Brain microvascular endothelial cell (primary cell): ENCODE measurements at regions of chr7 and their contacts with region 1.

Region 1: DNA sequence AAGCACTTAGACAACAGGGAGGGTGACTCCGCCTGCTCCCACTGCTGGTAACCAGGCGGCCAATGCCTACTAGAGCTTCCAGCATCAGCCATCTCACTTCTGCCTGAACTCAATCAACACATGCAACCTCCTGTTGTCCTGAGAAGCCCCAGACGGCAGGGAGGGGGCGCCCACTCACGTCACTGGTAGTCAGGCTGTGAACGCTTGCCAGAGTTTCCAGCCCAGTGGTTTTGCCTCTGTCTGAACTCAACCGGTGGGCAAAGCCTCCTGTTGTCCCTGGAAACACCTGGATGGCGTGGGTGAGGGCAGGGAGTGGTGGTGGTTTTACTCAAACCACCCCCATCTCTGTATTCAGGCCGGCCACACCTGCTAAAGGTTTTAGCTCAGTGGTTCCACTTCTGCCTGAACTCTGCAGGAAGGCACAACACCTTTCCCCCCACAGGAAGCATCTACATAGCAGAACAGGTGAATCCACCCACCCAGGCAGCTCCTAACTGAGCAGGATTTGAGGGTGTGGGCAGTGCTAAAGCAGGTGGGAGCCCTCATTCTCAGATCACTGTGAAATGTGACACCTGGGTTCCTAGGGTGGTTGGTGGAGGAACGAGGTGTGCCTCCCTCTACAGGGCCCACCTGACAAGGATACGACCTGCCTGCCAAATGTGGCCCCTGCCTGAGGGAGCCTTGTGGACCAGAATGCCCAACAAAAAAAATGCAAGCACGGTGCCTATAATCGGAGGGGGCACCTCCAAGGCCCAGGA is 563.0 kb upstream of the SEMA3D start:
- DNase-seq: no peak
- H3K4me3 ChIP-seq: no peak overlapping the region
- H3K27ac ChIP-seq: no peak overlapping the region
- H3K27me3 ChIP-seq: no peaks in the 10 kb centered on the region
- CTCF ChIP-seq: peak; percentile 8

Region 2: GRCh38 chr7:83936056-83936708 is 1813.7 kb before region 1 on chr7:
- in situ Hi-C with region 1: loop called (anchors 25 kb)
- DNase-seq: peak; percentile 62
- H3K4me3 ChIP-seq: no peak overlapping the region
- H3K27ac ChIP-seq: no peak overlapping the region
- H3K27me3 ChIP-seq: no peaks in the 10 kb centered on the region
- CTCF ChIP-seq: peak; percentile 91

Region 3: DNA sequence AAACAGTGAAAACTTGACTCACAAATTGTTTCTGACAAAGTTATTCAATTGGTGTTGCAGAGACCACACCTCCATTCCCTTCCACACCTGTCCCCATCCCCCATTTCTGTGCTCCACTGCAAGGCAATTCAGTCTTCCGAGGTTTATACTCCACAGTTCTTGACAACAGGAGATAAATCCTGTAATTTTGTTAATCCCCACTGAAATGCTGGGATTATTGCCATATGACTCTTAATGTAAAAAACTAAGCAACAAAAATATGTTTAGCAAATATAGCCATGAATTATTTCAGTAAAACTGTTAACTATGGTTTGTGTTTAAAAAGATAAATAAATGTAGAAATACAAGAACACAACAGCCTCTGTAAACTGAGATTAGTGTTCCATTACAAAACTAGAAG is 393.0 kb before region 1 on chr7:
- in situ Hi-C with region 1: no loop called
- DNase-seq: no peak
- H3K4me3 ChIP-seq: no peak overlapping the region
- H3K27ac ChIP-seq: no peak overlapping the region
- H3K27me3 ChIP-seq: no peaks in the 10 kb centered on the region
- CTCF ChIP-seq: no peak

Region 4: GRCh38 chr7:86534641-86535040 is 784.8 kb after region 1 on chr7:
- in situ Hi-C with region 1: no loop called
- DNase-seq: no peak
- H3K4me3 ChIP-seq: no peak overlapping the region
- H3K27ac ChIP-seq: no peak overlapping the region
- H3K27me3 ChIP-seq: no peaks in the 10 kb centered on the region
- CTCF ChIP-seq: no peak